Activated CD4-positive, alpha-beta T cell treated with anti-CD3 and anti-CD28 coated beads, Interleukin-2, amount 10 ng/mL, durations not matched to agents 7 days and 5 days (primary cell): ENCODE measurements at regions of chr20 and their contacts with region 1.

Region 1: DNA sequence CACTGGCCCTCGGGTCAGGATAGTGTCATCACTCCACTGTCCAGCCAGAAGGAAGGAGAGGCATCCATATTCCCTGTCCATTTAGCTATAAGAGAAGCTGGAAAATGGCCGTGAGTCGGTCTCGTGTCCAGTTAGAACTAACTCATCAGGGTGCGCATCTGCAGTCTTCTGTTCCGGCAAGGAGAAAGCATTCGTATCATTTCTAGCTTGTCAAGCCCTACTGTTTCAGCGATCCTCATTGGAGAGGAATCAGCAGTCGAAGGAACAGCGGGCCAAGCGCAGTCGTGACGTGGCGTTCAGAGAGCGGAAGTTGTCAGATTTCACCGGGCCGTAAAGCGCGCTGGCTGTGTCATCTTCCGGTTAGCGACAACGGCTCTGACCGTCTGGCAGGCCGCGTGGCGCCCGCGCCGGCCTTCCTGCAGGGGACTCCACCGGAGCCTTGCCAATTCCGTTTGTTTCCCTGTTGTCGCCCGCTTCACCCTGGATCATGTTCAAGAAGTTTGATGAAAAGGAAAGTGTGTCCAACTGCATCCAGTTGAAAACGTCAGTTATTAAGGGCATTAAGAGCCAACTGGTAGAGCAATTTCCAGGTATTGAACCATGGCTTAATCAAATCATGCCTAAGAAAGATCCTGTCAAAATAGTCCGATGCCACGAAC is 32.9 kb downstream of the HM13 start:
- DNase-seq: peak; percentile 85
- H3K4me3 Mint-ChIP-seq: peak overlapping the region; percentile 83
- H3K27ac Mint-ChIP-seq: peak overlapping the region; percentile 93
- H3K4me1 Mint-ChIP-seq: peaks cover 32% of the 10 kb centered on the region
- H3K27me3 Mint-ChIP-seq: no peaks in the 10 kb centered on the region

Region 2: GRCh38 chr20:31605031-31605901 is 58.1 kb after region 1 on chr20 and contains the start of gene ID1:
- CTCF ChIA-PET with region 1: interaction called, 282 read pairs
- POLR2A ChIA-PET with region 1: no interaction called
- DNase-seq: peak; percentile 92
- H3K4me3 Mint-ChIP-seq: peak within 1 kb of the TSS; percentile 84
- H3K27ac Mint-ChIP-seq: peak within 1 kb of the TSS; percentile 61
- H3K4me1 Mint-ChIP-seq: peaks cover 29% of the 10 kb centered on the region
- H3K27me3 Mint-ChIP-seq: peaks cover 46% of the 10 kb centered on the region
- total RNA-seq, gene ID1: 0.85 to 1.4 TPM